MCF 10A (cell line): ENCODE measurements at regions of chr16 and their contacts with region 1.

Region 1: GRCh38 chr16:80084685-80085084 is 456.1 kb upstream of the DYNLRB2 start:
- DNase-seq: peak; percentile 61
- H3K4me3 Mint-ChIP-seq: no peak overlapping the region
- H3K27ac Mint-ChIP-seq: no peak overlapping the region
- H3K4me1 Mint-ChIP-seq: peaks cover 6% of the 10 kb centered on the region
- H3K27me3 Mint-ChIP-seq: no peaks in the 10 kb centered on the region
- CTCF ChIP-seq: peak; percentile 48

Region 2: DNA sequence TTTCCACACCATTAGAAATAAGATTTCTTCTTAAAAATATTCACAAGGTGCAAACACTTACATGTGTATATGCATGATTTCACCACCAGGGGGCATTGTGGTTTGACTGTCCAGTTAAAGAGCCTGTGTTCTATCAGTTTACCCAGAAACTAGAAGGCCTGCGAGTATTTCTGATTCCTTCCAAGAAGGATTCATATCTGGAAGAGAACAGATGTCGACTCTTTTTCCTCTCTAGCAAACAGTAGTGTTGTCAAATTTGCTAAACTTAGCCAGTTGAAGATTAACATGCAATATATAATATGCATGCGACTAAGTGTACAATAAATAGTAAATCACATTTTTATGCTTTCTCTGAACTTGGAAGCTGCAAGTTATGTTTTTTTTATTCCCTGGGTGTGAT is 1581.1 kb before region 1 on chr16:
- CTCF ChIA-PET with region 1: no interaction called
- POLR2A ChIA-PET with region 1: no interaction called
- intact Hi-C with region 1: loop called (anchors 10 kb)
- DNase-seq: peak; percentile 56
- H3K4me3 Mint-ChIP-seq: no peak overlapping the region
- H3K27ac Mint-ChIP-seq: no peak overlapping the region
- H3K4me1 Mint-ChIP-seq: peaks cover 7% of the 10 kb centered on the region
- H3K27me3 Mint-ChIP-seq: no peaks in the 10 kb centered on the region
- CTCF ChIP-seq: peak; percentile 89

Region 3: GRCh38 chr16:78925083-78925767 is 1159.5 kb before region 1 on chr16:
- CTCF ChIA-PET with region 1: no interaction called
- POLR2A ChIA-PET with region 1: no interaction called
- intact Hi-C with region 1: loop called (anchors 10 kb)
- DNase-seq: peak; percentile 33
- H3K4me3 Mint-ChIP-seq: no peak overlapping the region
- H3K27ac Mint-ChIP-seq: no peak overlapping the region
- H3K4me1 Mint-ChIP-seq: no peaks in the 10 kb centered on the region
- H3K27me3 Mint-ChIP-seq: no peaks in the 10 kb centered on the region
- CTCF ChIP-seq: peak; percentile 53

Region 4: DNA sequence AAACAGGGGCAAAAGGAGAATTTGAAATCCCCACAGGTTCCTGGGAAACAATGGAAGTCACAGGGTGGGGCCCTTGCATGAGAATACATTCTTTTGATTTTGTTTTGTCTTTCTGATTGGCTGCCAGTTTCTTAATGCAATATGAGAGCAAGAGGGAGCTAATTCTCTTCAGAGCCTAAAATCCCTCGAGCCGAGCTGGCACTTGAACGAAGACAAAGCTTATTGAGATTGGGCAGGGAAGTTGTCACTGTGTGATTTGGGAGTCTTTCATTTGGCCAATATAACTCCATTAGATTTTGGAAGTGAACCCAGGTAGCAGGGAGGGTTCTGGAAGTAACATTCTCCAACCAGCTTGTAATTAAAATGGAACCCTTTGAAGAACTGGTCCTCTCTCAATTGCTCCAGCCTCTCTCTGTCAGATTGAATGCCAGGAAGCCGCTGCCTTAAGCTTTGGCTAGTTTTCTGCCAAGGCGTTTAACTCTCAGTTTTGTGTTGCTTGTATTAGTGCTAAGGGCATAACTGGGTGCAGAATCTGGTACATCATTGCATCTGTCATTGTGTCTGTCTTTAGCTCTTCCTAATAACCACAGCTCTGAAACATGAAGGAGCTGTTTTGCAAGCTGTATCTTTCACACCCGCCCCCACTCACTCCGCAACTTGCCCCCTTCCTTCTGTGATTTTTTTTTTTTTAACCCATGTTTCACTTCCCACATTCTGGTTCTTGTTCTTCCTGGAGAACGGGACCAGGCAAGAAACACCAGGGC is 756.1 kb before region 1 on chr16:
- CTCF ChIA-PET with region 1: no interaction called
- POLR2A ChIA-PET with region 1: no interaction called
- intact Hi-C with region 1: loop called (anchors 2 kb)
- DNase-seq: peak; percentile 34
- H3K4me3 Mint-ChIP-seq: no peak overlapping the region
- H3K27ac Mint-ChIP-seq: no peak overlapping the region
- H3K4me1 Mint-ChIP-seq: peaks cover 8% of the 10 kb centered on the region
- H3K27me3 Mint-ChIP-seq: peaks cover 47% of the 10 kb centered on the region
- CTCF ChIP-seq: no peak

Region 5: DNA sequence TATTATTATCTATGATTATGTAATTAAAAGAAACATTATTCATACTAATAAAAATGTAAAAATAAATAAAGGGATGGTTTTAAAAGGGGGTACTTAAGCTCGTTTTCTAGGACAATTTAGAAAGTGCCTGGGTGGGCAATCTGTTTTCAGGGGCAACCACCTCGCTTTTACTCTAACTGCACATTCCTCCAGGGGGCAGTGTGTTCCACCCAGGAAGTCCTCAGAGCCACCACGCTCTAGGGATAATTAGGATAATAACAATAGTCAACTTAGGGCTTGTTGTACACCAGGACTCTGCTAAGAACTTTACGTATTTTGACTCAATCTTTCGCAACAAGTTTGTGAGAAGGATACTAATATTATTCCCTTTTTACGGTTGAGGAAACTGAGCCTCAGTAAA is 87.4 kb before region 1 on chr16:
- CTCF ChIA-PET with region 1: interaction called, 3 read pairs
- POLR2A ChIA-PET with region 1: no interaction called
- intact Hi-C with region 1: loop called (anchors 1 kb)
- DNase-seq: peak; percentile 46
- H3K4me3 Mint-ChIP-seq: no peak overlapping the region
- H3K27ac Mint-ChIP-seq: no peak overlapping the region
- H3K4me1 Mint-ChIP-seq: peaks cover 11% of the 10 kb centered on the region
- H3K27me3 Mint-ChIP-seq: no peaks in the 10 kb centered on the region
- CTCF ChIP-seq: peak; percentile 37

Region 6: DNA sequence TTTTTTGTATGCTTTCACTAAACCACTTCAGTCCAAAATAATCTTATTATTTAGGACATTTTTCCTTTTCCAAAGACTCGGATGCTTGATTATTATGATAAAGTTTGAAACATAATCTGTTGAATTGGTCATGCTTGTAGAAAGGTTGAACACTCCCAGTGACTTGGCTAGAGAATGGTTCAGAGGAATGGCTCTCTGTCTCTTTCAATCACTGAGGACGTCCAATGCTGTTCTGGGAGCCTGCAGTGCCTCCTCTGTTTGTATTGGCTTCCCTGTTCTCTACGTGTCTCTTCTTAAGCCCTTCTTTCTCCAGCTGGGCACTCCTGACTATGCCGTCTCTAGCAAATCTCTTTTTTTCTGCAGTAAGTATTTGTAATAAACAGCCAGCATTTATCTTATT is 87.1 kb after region 1 on chr16:
- CTCF ChIA-PET with region 1: no interaction called
- POLR2A ChIA-PET with region 1: no interaction called
- intact Hi-C with region 1: no loop called
- DNase-seq: no peak
- H3K4me3 Mint-ChIP-seq: no peak overlapping the region
- H3K27ac Mint-ChIP-seq: no peak overlapping the region
- H3K4me1 Mint-ChIP-seq: peaks cover 34% of the 10 kb centered on the region
- H3K27me3 Mint-ChIP-seq: no peaks in the 10 kb centered on the region
- CTCF ChIP-seq: no peak

Region 7: GRCh38 chr16:80540516-80541272 is 456.0 kb after region 1 on chr16 and contains the start of gene DYNLRB2:
- CTCF ChIA-PET with region 1: no interaction called
- POLR2A ChIA-PET with region 1: no interaction called
- intact Hi-C with region 1: no loop called
- DNase-seq: peak; percentile 74
- H3K4me3 Mint-ChIP-seq: peak within 1 kb of the TSS; percentile 84
- H3K27ac Mint-ChIP-seq: peak within 1 kb of the TSS; percentile 94
- H3K4me1 Mint-ChIP-seq: peaks cover 5% of the 10 kb centered on the region
- H3K27me3 Mint-ChIP-seq: no peaks in the 10 kb centered on the region
- CTCF ChIP-seq: no peak
- total RNA-seq, gene DYNLRB2: not detected in 2 replicates